ENCODE measurements at regions of chrX and their contacts with region 1.

Region 1: GRCh38 chrX:49155900-49156837 is 6.4 kb upstream of the MAGIX start:
- DNase-seq: peak; percentile 89
- H3K4me3 Mint-ChIP-seq: peak overlapping the region; percentile 93
- H3K27ac Mint-ChIP-seq: peak overlapping the region; percentile 96
- H3K4me1 Mint-ChIP-seq: peaks cover 21% of the 10 kb centered on the region
- H3K27me3 Mint-ChIP-seq: peaks cover 23% of the 10 kb centered on the region

Region 2: GRCh38 chrX:49137492-49137891 is 18.7 kb before region 1 on chrX:
- CTCF ChIA-PET with region 1: interaction called, 10 read pairs
- DNase-seq: no peak
- H3K4me3 Mint-ChIP-seq: no peak overlapping the region
- H3K27ac Mint-ChIP-seq: no peak overlapping the region
- H3K4me1 Mint-ChIP-seq: no peaks in the 10 kb centered on the region
- H3K27me3 Mint-ChIP-seq: no peaks in the 10 kb centered on the region

Region 3: DNA sequence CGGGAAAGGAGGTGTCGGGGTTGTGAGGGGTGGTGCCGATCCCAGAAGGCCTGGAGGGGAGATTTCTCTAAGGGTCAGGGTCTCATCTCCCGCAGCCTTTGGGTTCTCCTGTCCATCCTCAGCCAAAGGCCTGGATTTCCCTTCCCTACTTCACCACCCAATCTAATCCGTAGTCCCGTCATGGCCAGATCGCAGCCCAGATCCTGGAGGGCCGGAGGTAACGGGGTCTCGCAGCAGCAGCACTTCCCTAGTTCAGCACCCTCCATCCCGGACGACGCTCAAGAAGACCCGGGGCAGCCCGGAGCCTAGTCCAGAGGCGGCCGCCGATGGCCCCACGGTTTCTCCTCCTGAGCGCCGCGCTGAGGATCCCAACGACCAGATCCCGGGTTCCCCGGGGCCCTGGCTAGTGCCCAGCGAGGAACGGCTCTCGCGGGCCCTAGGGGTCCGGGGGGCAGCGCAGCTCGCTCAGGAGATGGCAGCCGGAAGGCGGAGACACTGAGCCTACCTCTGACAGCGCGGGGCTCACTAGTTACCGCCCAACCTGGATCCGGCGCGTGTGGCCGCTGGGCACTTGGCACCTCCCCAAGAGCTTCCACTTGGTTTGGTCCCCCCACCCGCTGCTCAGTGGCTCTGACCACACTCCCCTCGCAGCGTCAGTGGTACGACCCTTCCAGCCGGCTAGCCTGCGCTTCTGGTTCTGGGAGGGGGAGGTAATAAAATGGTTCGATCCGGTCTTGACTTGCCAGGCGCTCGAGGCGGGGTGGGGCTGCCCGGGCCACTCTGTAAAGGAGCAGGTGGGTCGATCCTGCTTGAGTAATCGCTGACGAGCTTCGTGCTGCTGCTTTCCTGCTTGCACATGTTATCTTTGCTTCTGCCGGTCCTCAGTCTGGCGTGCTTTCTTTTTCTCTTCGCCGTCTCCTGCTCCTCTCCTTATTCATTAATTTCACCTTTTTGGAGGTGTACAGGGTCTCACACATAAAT is 10.0 kb after region 1 on chrX:
- CTCF ChIA-PET with region 1: interaction called, 21 read pairs
- DNase-seq: peak; percentile 82
- H3K4me3 Mint-ChIP-seq: peak overlapping the region; percentile 82
- H3K27ac Mint-ChIP-seq: peak overlapping the region; percentile 97
- H3K4me1 Mint-ChIP-seq: peaks cover 43% of the 10 kb centered on the region
- H3K27me3 Mint-ChIP-seq: no peaks in the 10 kb centered on the region

Measured in activated naive CD4-positive, alpha-beta T cell treated with anti-CD3 and anti-CD28 coated beads, Interleukin-2, amount 10 ng/mL, durations not matched to agents 7 days and 5 days (primary cell).